ENCODE measurements at regions of chr1 and their contacts with region 1.

Region 1: DNA sequence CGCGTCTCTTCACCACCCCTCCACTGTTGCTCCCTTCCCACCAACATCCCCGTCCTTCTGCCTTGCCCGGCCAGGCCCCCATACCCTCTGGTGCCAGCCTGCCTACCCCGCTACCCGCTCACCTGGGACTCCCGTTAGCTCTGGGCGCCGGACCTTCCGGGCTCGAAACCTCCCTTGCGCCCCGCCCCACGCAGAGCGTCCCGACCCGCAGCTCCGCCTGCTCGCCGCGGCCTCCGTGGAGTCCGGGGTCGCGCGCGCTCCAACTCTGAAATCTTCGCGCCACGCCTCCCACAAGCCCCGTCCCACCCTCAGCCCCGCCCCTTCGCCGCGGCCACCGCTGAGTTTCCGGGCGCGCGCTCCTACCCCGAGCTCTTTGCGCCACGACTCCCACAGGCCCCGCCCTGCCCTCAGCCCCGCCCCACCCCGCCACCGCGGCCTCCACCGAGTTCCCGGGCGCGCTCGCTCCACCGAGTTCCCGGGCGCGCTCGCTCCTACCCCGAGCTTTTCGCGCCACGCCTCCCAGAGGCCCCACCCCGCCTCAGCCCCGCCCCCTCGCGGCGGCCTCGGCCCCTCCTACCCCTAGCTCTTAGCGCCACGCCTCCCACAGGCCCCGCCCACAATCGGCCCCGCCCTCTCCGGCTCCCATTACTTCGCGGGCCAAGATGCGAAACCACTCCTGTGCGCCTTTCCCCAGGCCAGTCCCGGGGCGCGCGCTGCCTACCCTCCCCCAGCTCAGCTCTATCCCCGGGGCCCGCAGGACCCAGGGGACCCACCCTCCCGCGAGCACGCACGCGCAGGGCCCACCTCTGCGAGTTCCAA is at the start of gene IFT25:
- DNase-seq: peak; percentile 96 to 100 (median 99)
- ATAC-seq: peak; percentile 92
- H3K4me3 ChIP-seq: peak within 1 kb of the TSS; percentile 70
- H3K4me3 Mint-ChIP-seq: peak within 1 kb of the TSS; percentile 91 to 97 (median 96)
- H3K27ac ChIP-seq: peak within 1 kb of the TSS; percentile 83
- H3K27ac Mint-ChIP-seq: peak within 1 kb of the TSS; percentile 83 to 96 (median 93)
- H3K4me1 ChIP-seq: peaks cover 17 to 30% of the 10 kb centered on the region in 2 donors
- H3K4me1 Mint-ChIP-seq: peaks cover 33 to 64% (median 56%) of the 10 kb centered on the region in 7 donors
- H3K27me3 ChIP-seq: no peaks in the 10 kb centered on the region
- H3K27me3 Mint-ChIP-seq: no peaks in the 10 kb centered on the region
- total RNA-seq, gene IFT25: 17.5 to 59.9 (median 41.3) TPM

Region 2: GRCh38 chr1:53238197-53239155 is 707.2 kb before region 1 on chr1 and contains the start of gene MAGOH:
- CTCF ChIA-PET with region 1: no interaction called
- POLR2A ChIA-PET with region 1: no interaction called
- intact Hi-C with region 1: loop called in 1 of 2 experiments (anchors 5 kb)
- DNase-seq: peak; percentile 90 to 96 (median 95)
- ATAC-seq: peak; percentile 98
- H3K4me3 ChIP-seq: peak within 1 kb of the TSS; percentile 97
- H3K4me3 Mint-ChIP-seq: peak within 1 kb of the TSS; percentile 96 to 99 (median 98)
- H3K27ac ChIP-seq: peak within 1 kb of the TSS; percentile 94
- H3K27ac Mint-ChIP-seq: peak within 1 kb of the TSS; percentile 92 to 99 (median 98)
- H3K4me1 ChIP-seq: peaks cover 18 to 19% of the 10 kb centered on the region in 2 donors
- H3K4me1 Mint-ChIP-seq: peaks cover 18 to 47% (median 32%) of the 10 kb centered on the region in 7 donors
- H3K27me3 ChIP-seq: no peaks in the 10 kb centered on the region
- H3K27me3 Mint-ChIP-seq: peaks cover 0 to 2% (median 0%) of the 10 kb centered on the region in 5 donors
- total RNA-seq, gene MAGOH: 37.7 to 76.7 (median 52.3) TPM

Region 3: DNA sequence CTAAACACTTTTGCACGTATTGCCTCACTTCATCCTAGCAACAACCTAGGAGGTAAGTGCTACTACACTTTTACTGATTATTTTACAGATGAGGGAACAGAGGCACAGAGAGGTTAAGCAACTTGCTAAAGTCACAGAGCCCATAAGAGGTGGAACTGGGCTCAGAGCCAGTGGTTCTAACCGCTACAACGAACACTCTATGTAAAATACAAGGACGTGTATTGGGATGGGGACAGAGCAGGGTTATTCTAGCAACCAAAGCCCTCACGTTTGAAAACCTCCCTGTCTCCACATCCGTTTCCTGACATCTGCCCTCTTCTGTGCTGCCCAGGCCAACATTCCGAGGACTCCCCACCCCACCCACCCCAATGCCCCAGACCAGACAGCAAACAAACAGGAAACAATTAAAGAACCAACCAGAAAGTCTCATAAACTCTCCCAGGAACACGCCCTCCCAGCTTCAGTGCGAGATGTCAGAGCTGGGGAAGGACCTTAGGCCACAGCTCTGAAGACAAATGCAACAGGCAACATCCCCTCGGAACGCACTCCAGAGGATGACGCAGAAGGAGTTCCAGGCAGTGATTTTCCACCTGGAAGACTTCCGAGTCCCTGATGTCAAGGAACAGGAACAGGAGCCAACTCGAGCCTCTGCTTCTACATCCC is 247.8 kb before region 1 on chr1:
- CTCF ChIA-PET with region 1: no interaction called
- POLR2A ChIA-PET with region 1: no interaction called
- intact Hi-C with region 1: no loop called
- DNase-seq: no peak
- ATAC-seq: no peak
- H3K4me3 ChIP-seq: no peak overlapping the region
- H3K4me3 Mint-ChIP-seq: no peak overlapping the region
- H3K27ac ChIP-seq: no peak overlapping the region
- H3K27ac Mint-ChIP-seq: no peak overlapping the region
- H3K4me1 ChIP-seq: no peaks in the 10 kb centered on the region
- H3K4me1 Mint-ChIP-seq: no peaks in the 10 kb centered on the region
- H3K27me3 ChIP-seq: no peaks in the 10 kb centered on the region
- H3K27me3 Mint-ChIP-seq: peaks cover 0 to 7% (median 4%) of the 10 kb centered on the region in 5 donors

Region 4: DNA sequence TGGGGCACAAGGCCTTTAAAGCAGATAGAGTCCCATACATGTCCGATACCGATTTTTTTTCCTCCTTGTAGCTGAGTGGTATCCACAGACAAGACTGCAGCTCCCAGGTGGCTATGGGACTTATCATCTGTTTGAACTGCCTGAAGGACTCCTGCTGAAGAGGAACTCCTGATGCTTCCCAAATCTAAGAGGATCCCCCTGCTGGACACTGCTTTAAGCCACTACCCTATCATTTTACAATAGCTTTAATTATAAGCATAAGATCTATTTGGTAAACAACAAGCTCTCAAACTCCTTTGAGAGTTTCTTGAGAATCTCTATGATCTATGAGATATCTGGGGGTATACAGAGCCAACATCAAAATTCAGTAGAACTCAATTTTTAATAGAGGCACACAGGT is 119.3 kb before region 1 on chr1:
- CTCF ChIA-PET with region 1: no interaction called
- POLR2A ChIA-PET with region 1: no interaction called
- intact Hi-C with region 1: no loop called
- DNase-seq: no peak
- ATAC-seq: no peak
- H3K4me3 ChIP-seq: no peak overlapping the region
- H3K4me3 Mint-ChIP-seq: no peak overlapping the region
- H3K27ac ChIP-seq: no peak overlapping the region
- H3K27ac Mint-ChIP-seq: no peak overlapping the region
- H3K4me1 ChIP-seq: no peaks in the 10 kb centered on the region
- H3K4me1 Mint-ChIP-seq: peaks cover 0 to 9% (median 0%) of the 10 kb centered on the region in 7 donors
- H3K27me3 ChIP-seq: no peaks in the 10 kb centered on the region
- H3K27me3 Mint-ChIP-seq: no peaks in the 10 kb centered on the region

Region 5: GRCh38 chr1:53860967-53861411 is 84.7 kb before region 1 on chr1:
- CTCF ChIA-PET with region 1: interaction called, 56 read pairs
- POLR2A ChIA-PET with region 1: interaction called, 3 read pairs
- intact Hi-C with region 1: loop called (anchors 1 kb)
- DNase-seq: peak in 7 of 9 donors; percentile 43 to 63 (median 53)
- ATAC-seq: peak; percentile 86
- H3K4me3 ChIP-seq: no peak overlapping the region
- H3K4me3 Mint-ChIP-seq: no peak overlapping the region
- H3K27ac ChIP-seq: no peak overlapping the region
- H3K27ac Mint-ChIP-seq: peak overlapping the region in 3 of 9 donors; percentile 29 to 68 (median 34)
- H3K4me1 ChIP-seq: no peaks in the 10 kb centered on the region
- H3K4me1 Mint-ChIP-seq: peaks cover 0 to 9% (median 8%) of the 10 kb centered on the region in 7 donors
- H3K27me3 ChIP-seq: no peaks in the 10 kb centered on the region
- H3K27me3 Mint-ChIP-seq: no peaks in the 10 kb centered on the region

Region 6: GRCh38 chr1:53919675-53920066 is 26.0 kb before region 1 on chr1:
- CTCF ChIA-PET with region 1: no interaction called
- POLR2A ChIA-PET with region 1: interaction called, 12 read pairs
- intact Hi-C with region 1: loop called (anchors 2 kb)
- DNase-seq: no peak
- ATAC-seq: no peak
- H3K4me3 ChIP-seq: no peak overlapping the region
- H3K4me3 Mint-ChIP-seq: peak overlapping the region in 1 of 10 donors; percentile 59
- H3K27ac ChIP-seq: no peak overlapping the region
- H3K27ac Mint-ChIP-seq: peak overlapping the region; percentile 2 to 83 (median 67)
- H3K4me1 ChIP-seq: peaks cover 0 to 5% of the 10 kb centered on the region in 2 donors
- H3K4me1 Mint-ChIP-seq: peaks cover 7 to 44% (median 36%) of the 10 kb centered on the region in 7 donors
- H3K27me3 ChIP-seq: no peaks in the 10 kb centered on the region
- H3K27me3 Mint-ChIP-seq: no peaks in the 10 kb centered on the region

Region 7: DNA sequence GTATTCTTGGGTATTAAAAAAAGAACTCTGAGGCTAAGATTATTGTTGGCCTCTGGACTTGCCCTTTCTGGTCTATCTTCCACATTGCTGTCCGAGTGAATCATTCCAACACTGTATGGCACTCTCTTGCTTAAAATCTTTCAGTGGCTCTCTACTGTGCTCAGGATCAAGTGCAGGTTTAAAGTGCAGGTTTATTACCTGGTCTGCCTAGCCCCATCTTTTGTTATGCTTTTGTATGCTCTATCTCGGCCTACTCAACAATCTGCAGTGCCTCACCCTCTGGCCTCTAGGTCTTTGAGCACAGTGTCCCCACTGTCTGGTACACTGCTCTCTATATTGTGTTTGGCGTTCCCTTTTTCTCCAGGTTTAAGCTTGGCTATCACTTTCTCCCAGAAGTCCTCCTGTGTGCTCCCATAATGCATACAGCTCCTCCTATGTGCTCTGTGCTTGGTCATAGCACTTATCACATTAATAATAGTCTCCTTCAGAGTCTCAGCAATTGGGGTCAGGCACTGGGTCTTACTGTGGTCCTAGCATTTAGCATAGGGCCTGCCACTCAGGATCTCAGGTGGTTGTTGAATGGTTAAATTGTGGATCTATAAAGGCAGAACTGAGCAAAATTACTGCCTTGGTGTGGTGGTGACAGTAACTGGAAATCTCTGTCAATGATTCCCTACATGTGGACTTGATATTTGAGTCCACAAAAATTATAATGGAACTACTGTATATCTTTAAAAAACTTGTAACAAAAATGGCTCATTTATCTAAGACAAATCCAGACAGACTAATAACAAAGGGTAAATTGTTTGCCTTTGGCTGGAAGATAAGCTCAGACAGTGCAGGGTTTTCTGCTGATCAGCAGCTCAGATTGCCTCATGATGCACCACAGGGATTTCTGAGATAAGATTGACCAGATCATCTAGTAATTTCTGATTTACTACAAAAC is 82.9 kb after region 1 on chr1:
- CTCF ChIA-PET with region 1: no interaction called
- POLR2A ChIA-PET with region 1: no interaction called
- intact Hi-C with region 1: no loop called
- DNase-seq: no peak
- ATAC-seq: no peak
- H3K4me3 ChIP-seq: no peak overlapping the region
- H3K4me3 Mint-ChIP-seq: no peak overlapping the region
- H3K27ac ChIP-seq: no peak overlapping the region
- H3K27ac Mint-ChIP-seq: peak overlapping the region in 5 of 9 donors; percentile 1 to 63 (median 12)
- H3K4me1 ChIP-seq: no peaks in the 10 kb centered on the region
- H3K4me1 Mint-ChIP-seq: no peaks in the 10 kb centered on the region
- H3K27me3 ChIP-seq: no peaks in the 10 kb centered on the region
- H3K27me3 Mint-ChIP-seq: no peaks in the 10 kb centered on the region

Region 8: DNA sequence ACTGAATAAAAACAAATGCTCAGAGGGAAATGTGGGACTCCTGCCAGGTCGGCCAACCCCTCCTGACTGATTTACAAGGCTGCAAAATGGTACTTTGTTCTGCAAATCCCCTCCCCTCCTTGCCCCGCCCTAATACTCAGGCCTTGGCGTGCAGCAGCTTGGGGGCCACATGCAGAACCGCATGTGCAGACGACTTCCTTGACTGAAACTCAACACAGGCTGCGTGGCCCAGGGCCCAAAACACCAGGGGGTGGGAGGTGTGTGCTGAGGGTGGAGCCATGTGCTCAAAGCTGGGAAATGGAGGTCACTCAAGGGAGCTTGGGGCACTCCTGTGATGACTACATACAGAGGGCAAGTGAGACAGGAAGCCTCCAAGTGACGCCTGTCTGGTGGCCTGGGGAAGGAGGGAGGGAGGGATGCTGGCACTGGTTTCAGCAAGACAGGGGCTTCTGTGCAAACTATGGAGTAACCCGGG is 341.6 kb after region 1 on chr1:
- CTCF ChIA-PET with region 1: no interaction called
- POLR2A ChIA-PET with region 1: no interaction called
- intact Hi-C with region 1: loop called in 1 of 2 experiments (anchors 1 kb)
- DNase-seq: peak; percentile 21 to 82 (median 73)
- ATAC-seq: peak; percentile 76
- H3K4me3 ChIP-seq: peak overlapping the region; percentile 21
- H3K4me3 Mint-ChIP-seq: peak overlapping the region; percentile 79 to 90 (median 87)
- H3K27ac ChIP-seq: peak overlapping the region; percentile 85
- H3K27ac Mint-ChIP-seq: peak overlapping the region; percentile 87 to 99 (median 96)
- H3K4me1 ChIP-seq: peaks cover 6 to 90% of the 10 kb centered on the region in 2 donors
- H3K4me1 Mint-ChIP-seq: peaks cover 59 to 100% (median 94%) of the 10 kb centered on the region in 7 donors
- H3K27me3 ChIP-seq: no peaks in the 10 kb centered on the region
- H3K27me3 Mint-ChIP-seq: no peaks in the 10 kb centered on the region

Region 9: GRCh38 chr1:54800899-54801759 is 855.5 kb after region 1 on chr1 and contains the start of gene TTC22:
- CTCF ChIA-PET with region 1: no interaction called
- POLR2A ChIA-PET with region 1: interaction called, 6 read pairs
- intact Hi-C with region 1: loop called in 1 of 2 experiments (anchors 5 kb)
- DNase-seq: peak; percentile 49 to 71 (median 64)
- ATAC-seq: peak; percentile 91
- H3K4me3 ChIP-seq: peak within 1 kb of the TSS; percentile 94
- H3K4me3 Mint-ChIP-seq: peak within 1 kb of the TSS; percentile 90 to 99 (median 96)
- H3K27ac ChIP-seq: peak within 1 kb of the TSS; percentile 74
- H3K27ac Mint-ChIP-seq: peak within 1 kb of the TSS; percentile 82 to 97 (median 90)
- H3K4me1 ChIP-seq: peaks cover 38 to 44% of the 10 kb centered on the region in 2 donors
- H3K4me1 Mint-ChIP-seq: peaks cover 32 to 77% (median 56%) of the 10 kb centered on the region in 7 donors
- H3K27me3 ChIP-seq: no peaks in the 10 kb centered on the region
- H3K27me3 Mint-ChIP-seq: no peaks in the 10 kb centered on the region
- total RNA-seq, gene TTC22: 7.0 to 16.6 (median 9.8) TPM